ENCODE measurements at regions of chr6 and their contacts with region 1.

Region 1: DNA sequence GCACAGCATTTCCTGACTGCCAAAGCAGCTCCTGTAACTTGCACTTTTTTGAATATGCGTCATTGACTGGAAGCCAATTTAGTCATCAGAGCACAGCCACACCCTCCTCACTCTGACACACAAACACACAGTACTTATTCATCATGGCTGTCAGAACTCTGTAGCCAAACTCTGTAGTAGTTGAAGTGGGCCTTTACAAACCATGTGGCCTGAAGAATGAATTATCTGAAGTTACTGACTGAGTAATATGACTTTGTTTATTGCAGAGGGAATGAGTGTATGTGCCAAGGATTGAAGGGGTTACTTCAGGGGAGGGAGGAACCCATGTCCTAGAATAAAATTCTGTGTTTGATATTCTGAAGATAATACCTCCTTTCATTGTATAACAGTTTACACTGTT is 102.7 kb downstream of the FIG4 start:
- DNase-seq: peak; percentile 60
- H3K4me3 Mint-ChIP-seq: no peak overlapping the region
- H3K27ac Mint-ChIP-seq: peak overlapping the region; percentile 81
- H3K4me1 Mint-ChIP-seq: peaks cover 26% of the 10 kb centered on the region
- H3K27me3 Mint-ChIP-seq: no peaks in the 10 kb centered on the region
- CTCF ChIP-seq: no peak

Region 2: DNA sequence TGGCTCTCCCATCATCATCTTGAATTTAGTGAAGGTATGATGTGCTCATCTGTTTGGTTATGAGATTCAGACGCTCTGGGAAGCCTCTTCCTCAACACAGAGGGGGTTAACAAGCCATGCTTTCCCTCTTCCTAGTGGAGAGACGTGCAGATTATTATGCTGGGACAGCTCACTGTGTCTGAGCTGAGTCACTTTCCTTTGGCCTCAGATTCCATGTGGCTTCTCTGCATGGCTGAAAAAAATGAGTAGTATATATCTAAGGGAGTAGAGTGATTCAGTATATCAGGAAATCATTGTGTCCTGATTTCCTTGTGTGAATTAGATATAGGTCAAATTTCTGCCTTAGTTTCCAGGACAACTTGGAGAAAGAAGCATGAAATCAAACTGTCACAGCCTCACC is 50.1 kb before region 1 on chr6:
- CTCF ChIA-PET with region 1: no interaction called
- intact Hi-C with region 1: no loop called
- DNase-seq: no peak
- H3K4me3 Mint-ChIP-seq: no peak overlapping the region
- H3K27ac Mint-ChIP-seq: no peak overlapping the region
- H3K4me1 Mint-ChIP-seq: no peaks in the 10 kb centered on the region
- H3K27me3 Mint-ChIP-seq: no peaks in the 10 kb centered on the region
- CTCF ChIP-seq: no peak

Region 3: GRCh38 chr6:109808837-109809236 is 15.0 kb after region 1 on chr6:
- CTCF ChIA-PET with region 1: interaction called, 10 read pairs
- intact Hi-C with region 1: no loop called
- DNase-seq: no peak
- H3K4me3 Mint-ChIP-seq: no peak overlapping the region
- H3K27ac Mint-ChIP-seq: no peak overlapping the region
- H3K4me1 Mint-ChIP-seq: no peaks in the 10 kb centered on the region
- H3K27me3 Mint-ChIP-seq: no peaks in the 10 kb centered on the region
- CTCF ChIP-seq: no peak

Region 4: GRCh38 chr6:109925079-109925478 is 131.3 kb after region 1 on chr6:
- CTCF ChIA-PET with region 1: no interaction called
- intact Hi-C with region 1: no loop called
- DNase-seq: peak; percentile 11
- H3K4me3 Mint-ChIP-seq: no peak overlapping the region
- H3K27ac Mint-ChIP-seq: no peak overlapping the region
- H3K4me1 Mint-ChIP-seq: peaks cover 24% of the 10 kb centered on the region
- H3K27me3 Mint-ChIP-seq: no peaks in the 10 kb centered on the region
- CTCF ChIP-seq: no peak

Measured in Calu3 (cell line).